Mammary epithelial cell (primary cell): ENCODE measurements at regions of chrX and their contacts with region 1.

Region 1: DNA sequence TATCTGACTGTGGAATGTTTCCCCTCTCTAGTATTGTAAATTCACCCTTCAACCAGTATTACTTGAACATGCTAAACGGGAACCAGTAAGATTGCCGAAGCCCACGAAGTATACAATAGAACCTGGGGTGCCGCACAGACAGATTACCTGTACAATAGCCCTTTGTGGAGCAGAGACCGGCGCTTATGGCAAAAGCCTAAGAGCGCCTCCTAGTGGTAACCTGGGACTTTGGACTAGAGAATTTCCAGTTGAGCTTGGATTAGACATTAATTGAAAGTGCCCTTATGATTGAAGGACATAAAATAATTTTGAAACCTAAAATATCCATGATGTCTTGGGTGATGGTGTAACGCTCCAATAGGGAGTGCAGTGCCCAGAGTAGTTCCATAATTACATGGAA is 14.1 kb downstream of the ZNF157 start:
- DNase-seq: peak; percentile 56
- H3K4me3 ChIP-seq: no peak overlapping the region
- H3K27ac ChIP-seq: no peak overlapping the region
- H3K4me1 ChIP-seq: no peaks in the 10 kb centered on the region
- H3K27me3 ChIP-seq: no peaks in the 10 kb centered on the region
- CTCF ChIP-seq: peak; percentile 63 to 74

Region 2: GRCh38 chrX:47311932-47312774 is 72.3 kb before region 1 on chrX:
- CTCF ChIA-PET with region 1: no interaction called
- dilution Hi-C with region 1: no loop called
- in situ Hi-C with region 1: no loop called
- intact Hi-C with region 1: loop called (anchors 1 kb)
- DNase-seq: peak; percentile 62
- H3K4me3 ChIP-seq: no peak overlapping the region
- H3K27ac ChIP-seq: no peak overlapping the region
- H3K4me1 ChIP-seq: no peaks in the 10 kb centered on the region
- H3K27me3 ChIP-seq: no peaks in the 10 kb centered on the region
- CTCF ChIP-seq: peak; percentile 50 to 72

Region 3: GRCh38 chrX:47358387-47359065 is 26.0 kb before region 1 on chrX:
- CTCF ChIA-PET with region 1: no interaction called
- dilution Hi-C with region 1: no loop called
- in situ Hi-C with region 1: no loop called
- intact Hi-C with region 1: no loop called
- DNase-seq: no peak
- H3K4me3 ChIP-seq: no peak overlapping the region
- H3K27ac ChIP-seq: no peak overlapping the region
- H3K4me1 ChIP-seq: no peaks in the 10 kb centered on the region
- H3K27me3 ChIP-seq: no peaks in the 10 kb centered on the region
- CTCF ChIP-seq: no peak